CD4-positive, alpha-beta T cell (primary cell): ENCODE measurements at regions of chr6 and their contacts with region 1.

Region 1: GRCh38 chr6:27838058-27838944 is 73.9 kb downstream of the OR2B2 start:
- DNase-seq: peak; percentile 52 to 98 (median 73)
- ATAC-seq: peak; percentile 73
- H3K4me3 ChIP-seq: peak overlapping the region; percentile 83
- H3K4me3 Mint-ChIP-seq: no peak overlapping the region
- H3K27ac ChIP-seq: peak overlapping the region; percentile 92 to 97
- H3K27ac Mint-ChIP-seq: no peak overlapping the region
- H3K4me1 ChIP-seq: peaks cover 32% of the 10 kb centered on the region
- H3K4me1 Mint-ChIP-seq: peaks cover 6% of the 10 kb centered on the region
- H3K27me3 ChIP-seq: peaks cover 0 to 6% of the 10 kb centered on the region in 2 experiments
- H3K27me3 Mint-ChIP-seq: peaks cover 12% of the 10 kb centered on the region
- CTCF ChIP-seq: no peak

Region 2: GRCh38 chr6:26054857-26055669 is 1783.2 kb before region 1 on chr6:
- CTCF ChIA-PET with region 1: no interaction called
- POLR2A ChIA-PET with region 1: interaction called, 33 read pairs
- intact Hi-C with region 1: no loop called
- DNase-seq: peak; percentile 68 to 97 (median 80)
- ATAC-seq: peak; percentile 71
- H3K4me3 ChIP-seq: peak overlapping the region; percentile 89
- H3K4me3 Mint-ChIP-seq: peak overlapping the region; percentile 97
- H3K27ac ChIP-seq: peak overlapping the region; percentile 81
- H3K27ac Mint-ChIP-seq: peak overlapping the region; percentile 96
- H3K4me1 ChIP-seq: peaks cover 29% of the 10 kb centered on the region
- H3K4me1 Mint-ChIP-seq: peaks cover 28% of the 10 kb centered on the region
- H3K27me3 ChIP-seq: no peaks in the 10 kb centered on the region
- H3K27me3 Mint-ChIP-seq: no peaks in the 10 kb centered on the region
- CTCF ChIP-seq: no peak

Region 3: DNA sequence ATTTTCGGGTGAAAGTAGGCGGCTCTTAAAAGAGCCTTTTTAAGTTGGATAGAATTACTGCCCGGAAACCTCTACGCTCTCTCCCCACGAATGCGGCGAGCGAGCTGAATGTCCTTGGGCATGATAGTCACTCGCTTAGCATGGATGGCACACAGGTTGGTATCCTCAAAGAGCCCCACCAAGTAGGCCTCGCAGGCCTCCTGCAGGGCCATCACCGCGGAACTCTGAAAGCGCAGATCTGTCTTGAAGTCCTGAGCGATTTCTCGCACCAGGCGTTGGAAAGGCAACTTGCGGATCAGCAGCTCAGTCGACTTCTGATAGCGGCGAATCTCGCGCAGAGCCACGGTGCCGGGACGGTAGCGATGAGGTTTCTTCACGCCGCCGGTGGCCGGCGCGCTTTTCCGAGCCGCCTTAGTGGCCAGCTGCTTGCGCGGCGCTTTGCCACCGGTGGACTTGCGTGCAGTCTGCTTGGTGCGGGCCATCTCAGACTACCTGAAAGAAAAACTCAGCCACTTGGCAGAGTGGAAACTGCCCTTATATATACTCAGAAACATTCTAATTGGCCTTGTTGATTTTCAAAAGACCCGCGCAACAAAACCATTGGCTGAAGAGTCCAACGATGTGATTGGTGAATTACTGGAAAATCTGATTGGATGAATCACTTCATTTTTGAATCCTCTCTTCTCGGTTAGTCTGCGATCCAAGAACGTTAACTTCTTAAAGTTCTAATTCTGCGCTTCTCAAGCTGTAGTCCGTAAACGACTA is 1567.2 kb before region 1 on chr6:
- CTCF ChIA-PET with region 1: no interaction called
- POLR2A ChIA-PET with region 1: interaction called, 44 read pairs
- intact Hi-C with region 1: no loop called
- DNase-seq: peak; percentile 60 to 92 (median 75)
- ATAC-seq: peak; percentile 25
- H3K4me3 ChIP-seq: peak overlapping the region; percentile 59
- H3K4me3 Mint-ChIP-seq: no peak overlapping the region
- H3K27ac ChIP-seq: peak overlapping the region; percentile 82 to 84
- H3K27ac Mint-ChIP-seq: no peak overlapping the region
- H3K4me1 ChIP-seq: peaks cover 28% of the 10 kb centered on the region
- H3K4me1 Mint-ChIP-seq: peaks cover 7% of the 10 kb centered on the region
- H3K27me3 ChIP-seq: no peaks in the 10 kb centered on the region
- H3K27me3 Mint-ChIP-seq: no peaks in the 10 kb centered on the region
- CTCF ChIP-seq: no peak

Region 4: GRCh38 chr6:27177485-27178406 is 660.6 kb before region 1 on chr6:
- CTCF ChIA-PET with region 1: no interaction called
- POLR2A ChIA-PET with region 1: interaction called, 22 read pairs
- intact Hi-C with region 1: no loop called
- DNase-seq: peak; percentile 44 to 90 (median 64)
- ATAC-seq: peak; percentile 64
- H3K4me3 ChIP-seq: peak overlapping the region; percentile 89
- H3K4me3 Mint-ChIP-seq: peak overlapping the region; percentile 99
- H3K27ac ChIP-seq: peak overlapping the region; percentile 27 to 63
- H3K27ac Mint-ChIP-seq: peak overlapping the region; percentile 100
- H3K4me1 ChIP-seq: peaks cover 21% of the 10 kb centered on the region
- H3K4me1 Mint-ChIP-seq: peaks cover 24% of the 10 kb centered on the region
- H3K27me3 ChIP-seq: no peaks in the 10 kb centered on the region
- H3K27me3 Mint-ChIP-seq: peaks cover 24% of the 10 kb centered on the region
- CTCF ChIP-seq: peak; percentile 54

Region 5: DNA sequence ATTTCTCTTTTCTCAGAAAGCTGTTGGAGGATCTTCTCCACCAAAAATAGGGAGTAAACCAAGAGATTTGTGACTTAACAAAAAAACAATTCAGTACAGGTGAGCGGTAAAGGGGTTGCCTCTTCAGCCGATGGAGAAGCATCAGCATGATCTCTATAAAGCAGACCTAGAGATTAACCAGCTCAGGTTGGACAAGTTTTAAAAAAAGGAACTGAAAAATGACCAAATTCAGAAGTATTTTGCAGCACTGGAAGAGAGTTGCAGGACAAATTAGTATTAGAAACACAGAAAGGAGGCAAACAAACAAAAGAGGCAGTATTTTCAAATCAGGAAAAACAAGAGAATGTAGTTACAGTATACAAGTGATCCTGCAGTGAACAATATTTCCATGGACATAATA is 325.8 kb before region 1 on chr6:
- CTCF ChIA-PET with region 1: no interaction called
- POLR2A ChIA-PET with region 1: no interaction called
- intact Hi-C with region 1: no loop called
- DNase-seq: no peak
- ATAC-seq: no peak
- H3K4me3 ChIP-seq: no peak overlapping the region
- H3K4me3 Mint-ChIP-seq: no peak overlapping the region
- H3K27ac ChIP-seq: no peak overlapping the region
- H3K27ac Mint-ChIP-seq: no peak overlapping the region
- H3K4me1 ChIP-seq: no peaks in the 10 kb centered on the region
- H3K4me1 Mint-ChIP-seq: peaks cover 8% of the 10 kb centered on the region
- H3K27me3 ChIP-seq: peaks cover 20 to 45% of the 10 kb centered on the region in 2 experiments
- H3K27me3 Mint-ChIP-seq: peaks cover 80% of the 10 kb centered on the region
- CTCF ChIP-seq: no peak

Region 6: DNA sequence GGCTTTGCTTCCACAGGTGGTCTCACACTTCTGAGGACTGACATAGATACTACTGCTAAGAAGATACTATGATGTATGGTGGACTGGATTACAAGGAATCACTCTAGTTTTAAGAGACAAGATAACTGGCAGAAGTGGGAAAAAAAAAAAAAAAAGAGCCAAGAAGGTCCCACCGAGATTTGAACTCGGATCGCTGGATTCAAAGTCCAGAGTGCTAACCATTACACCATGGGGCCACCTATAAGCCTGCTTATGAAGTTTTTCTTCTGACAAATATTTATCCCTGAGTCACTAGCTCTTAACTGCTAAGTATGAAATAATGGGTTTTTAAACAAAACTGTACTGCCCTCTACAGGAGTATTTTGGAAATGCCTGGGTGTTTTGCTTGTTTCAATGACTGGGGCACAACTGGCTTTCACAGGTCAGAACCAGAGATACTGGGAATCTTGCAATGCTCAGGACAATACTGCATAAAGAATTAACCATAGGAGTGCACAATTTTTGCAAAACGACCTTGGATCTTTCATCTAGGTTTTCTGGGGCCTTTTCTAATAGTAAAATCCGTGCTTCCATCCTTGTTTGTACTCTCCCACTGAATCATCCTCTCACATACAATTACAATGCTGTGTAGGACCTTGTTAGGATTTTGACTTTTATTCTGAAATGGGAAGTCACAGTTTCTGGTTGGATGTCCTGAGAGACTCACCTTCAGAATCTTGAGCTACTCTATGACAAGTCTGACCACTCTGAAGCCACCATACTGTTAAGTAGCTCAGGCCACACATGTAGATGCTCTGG is 42.4 kb before region 1 on chr6:
- CTCF ChIA-PET with region 1: interaction called, 9 read pairs
- POLR2A ChIA-PET with region 1: interaction called, 29 read pairs
- intact Hi-C with region 1: no loop called
- DNase-seq: peak in 9 of 14 experiments; percentile 11 to 88 (median 36)
- ATAC-seq: peak; percentile 72
- H3K4me3 ChIP-seq: no peak overlapping the region
- H3K4me3 Mint-ChIP-seq: peak overlapping the region; percentile 47
- H3K27ac ChIP-seq: no peak overlapping the region
- H3K27ac Mint-ChIP-seq: peak overlapping the region; percentile 80
- H3K4me1 ChIP-seq: peaks cover 20% of the 10 kb centered on the region
- H3K4me1 Mint-ChIP-seq: peaks cover 31% of the 10 kb centered on the region
- H3K27me3 ChIP-seq: peaks cover 5 to 9% of the 10 kb centered on the region in 2 experiments
- H3K27me3 Mint-ChIP-seq: peaks cover 18% of the 10 kb centered on the region
- CTCF ChIP-seq: peak; percentile 80

Region 7: DNA sequence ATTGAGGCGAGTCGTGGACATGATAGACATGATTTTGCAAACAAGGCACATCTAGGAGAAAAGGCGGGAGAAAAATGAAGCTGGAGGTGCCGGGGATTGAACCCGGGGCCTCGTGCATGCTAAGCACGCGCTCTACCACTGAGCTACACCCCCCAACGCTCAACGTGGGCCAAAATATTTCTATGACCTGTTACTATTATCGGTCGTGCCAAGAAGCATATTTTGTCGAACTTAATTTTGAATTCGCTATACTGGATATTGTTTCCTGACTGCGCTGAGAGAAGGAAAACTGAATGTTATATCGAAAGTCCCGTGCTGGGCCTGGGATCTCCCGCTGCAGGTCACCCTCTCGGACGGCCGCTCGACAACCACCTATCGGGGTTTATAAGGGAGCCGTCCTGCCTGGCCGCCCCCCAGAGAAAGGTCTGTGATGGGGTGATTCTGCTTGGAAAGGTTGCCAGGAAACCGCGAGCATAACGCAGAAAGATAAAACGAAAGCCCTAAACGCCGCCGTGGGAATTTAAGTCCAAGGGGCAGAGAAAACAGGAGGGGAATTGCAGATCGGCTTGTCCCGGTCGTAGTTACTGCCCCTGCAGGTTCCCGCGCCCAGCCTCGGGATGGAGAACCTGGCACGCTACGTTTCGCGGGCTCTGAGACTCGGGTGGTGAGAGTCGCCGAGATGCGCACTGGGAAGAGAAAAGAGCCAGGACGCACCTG is 1025.5 kb after region 1 on chr6:
- CTCF ChIA-PET with region 1: no interaction called
- POLR2A ChIA-PET with region 1: interaction called, 16 read pairs
- intact Hi-C with region 1: no loop called
- DNase-seq: peak; percentile 69 to 93 (median 80)
- ATAC-seq: peak; percentile 39
- H3K4me3 ChIP-seq: peak overlapping the region; percentile 82
- H3K4me3 Mint-ChIP-seq: peak overlapping the region; percentile 88
- H3K27ac ChIP-seq: peak overlapping the region; percentile 30 to 47
- H3K27ac Mint-ChIP-seq: peak overlapping the region; percentile 93
- H3K4me1 ChIP-seq: peaks cover 34% of the 10 kb centered on the region
- H3K4me1 Mint-ChIP-seq: peaks cover 51% of the 10 kb centered on the region
- H3K27me3 ChIP-seq: no peaks in the 10 kb centered on the region
- H3K27me3 Mint-ChIP-seq: peaks cover 7% of the 10 kb centered on the region
- CTCF ChIP-seq: peak; percentile 10